Stomach (tissue), 19 donors: ENCODE measurements at regions of chr5 and their contacts with region 1.

Region 1: GRCh38 chr5:151164686-151165392 is 7.3 kb upstream of the ANXA6 start:
- DNase-seq: peak; percentile 82 to 93
- H3K4me3 ChIP-seq: no peak overlapping the region
- H3K27ac ChIP-seq: no peak overlapping the region
- H3K4me1 ChIP-seq: peaks cover 0 to 20% (median 3%) of the 10 kb centered on the region in 4 donors
- H3K27me3 ChIP-seq: no peaks in the 10 kb centered on the region
- CTCF ChIP-seq: peak in 5 of 7 experiments; percentile 85 to 91 (median 88)
- EP300 ChIP-seq: no peak
- POLR2A ChIP-seq: no peak

Region 2: GRCh38 chr5:151097786-151098498 is 66.9 kb before region 1 on chr5:
- intact Hi-C with region 1: no loop called
- DNase-seq: no peak
- H3K4me3 ChIP-seq: no peak overlapping the region
- H3K27ac ChIP-seq: peak overlapping the region in 3 of 5 donors; percentile 19 to 86 (median 80)
- H3K4me1 ChIP-seq: peaks cover 52 to 97% (median 70%) of the 10 kb centered on the region in 4 donors
- H3K27me3 ChIP-seq: no peaks in the 10 kb centered on the region
- CTCF ChIP-seq: no peak
- EP300 ChIP-seq: no peak
- POLR2A ChIP-seq: no peak

Region 3: GRCh38 chr5:151126199-151126645 is 38.6 kb before region 1 on chr5:
- intact Hi-C with region 1: loop called (anchors 5 kb)
- DNase-seq: peak; percentile 82 to 86
- H3K4me3 ChIP-seq: no peak overlapping the region
- H3K27ac ChIP-seq: peak overlapping the region in 3 of 5 donors; percentile 25 to 58 (median 38)
- H3K4me1 ChIP-seq: peaks cover 10 to 53% (median 28%) of the 10 kb centered on the region in 4 donors
- H3K27me3 ChIP-seq: no peaks in the 10 kb centered on the region
- CTCF ChIP-seq: peak in 5 of 7 experiments; percentile 60 to 92 (median 81)
- EP300 ChIP-seq: no peak
- POLR2A ChIP-seq: no peak

Region 4: DNA sequence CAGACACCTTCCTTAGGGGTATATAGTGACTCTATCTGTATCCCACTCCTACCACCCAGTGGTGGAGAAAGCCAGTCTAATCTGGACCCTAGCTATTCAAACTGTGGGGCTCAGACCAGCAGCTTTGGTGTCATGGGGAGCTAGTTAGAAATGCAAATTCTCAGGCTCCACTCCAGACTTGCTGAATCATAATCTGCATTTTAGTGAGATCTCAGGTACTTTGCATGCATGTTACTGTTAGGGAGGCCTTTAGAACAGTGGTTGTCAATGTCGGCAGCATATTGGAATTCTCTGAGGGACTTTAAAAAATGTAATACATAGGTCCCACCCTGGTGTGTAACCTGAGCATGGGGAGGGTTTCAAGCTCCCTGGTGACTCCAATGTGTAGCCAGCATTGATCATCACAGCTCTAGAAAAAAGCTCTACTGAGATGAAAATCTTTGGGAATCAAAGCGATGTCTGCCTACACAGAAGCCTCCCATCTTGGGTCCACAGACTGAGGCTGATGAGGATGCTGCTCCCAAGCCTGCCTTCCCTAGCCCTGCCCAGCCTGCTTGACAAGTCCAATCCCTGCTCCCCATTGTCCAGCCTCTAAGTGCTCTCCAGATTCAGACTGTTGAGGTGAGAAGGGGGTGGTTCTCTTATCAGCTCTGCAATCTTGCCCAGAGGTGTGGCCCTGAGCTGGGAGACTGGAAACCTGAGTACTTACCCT is 76.2 kb after region 1 on chr5:
- intact Hi-C with region 1: loop called (anchors 10 kb)
- DNase-seq: no peak
- H3K4me3 ChIP-seq: no peak overlapping the region
- H3K27ac ChIP-seq: no peak overlapping the region
- H3K4me1 ChIP-seq: peaks cover 0 to 12% (median 6%) of the 10 kb centered on the region in 4 donors
- H3K27me3 ChIP-seq: no peaks in the 10 kb centered on the region
- CTCF ChIP-seq: no peak
- EP300 ChIP-seq: no peak
- POLR2A ChIP-seq: no peak

Region 5: GRCh38 chr5:151447174-151448037 is 282.6 kb after region 1 on chr5 and contains the start of gene SLC36A1:
- intact Hi-C with region 1: no loop called
- DNase-seq: peak; percentile 96 to 97
- H3K4me3 ChIP-seq: peak within 1 kb of the TSS; percentile 78 to 80 (median 79)
- H3K27ac ChIP-seq: peak within 1 kb of the TSS; percentile 72 to 83 (median 74)
- H3K4me1 ChIP-seq: peaks cover 5 to 36% (median 19%) of the 10 kb centered on the region in 4 donors
- H3K27me3 ChIP-seq: no peaks in the 10 kb centered on the region
- CTCF ChIP-seq: peak in 5 of 7 experiments; percentile 94 to 99 (median 97)
- EP300 ChIP-seq: no peak
- POLR2A ChIP-seq: no peak
- total RNA-seq, gene SLC36A1: 2.3 to 27.8 (median 11.9) TPM